ENCODE measurements at regions of chr1 and their contacts with region 1.

Region 1: DNA sequence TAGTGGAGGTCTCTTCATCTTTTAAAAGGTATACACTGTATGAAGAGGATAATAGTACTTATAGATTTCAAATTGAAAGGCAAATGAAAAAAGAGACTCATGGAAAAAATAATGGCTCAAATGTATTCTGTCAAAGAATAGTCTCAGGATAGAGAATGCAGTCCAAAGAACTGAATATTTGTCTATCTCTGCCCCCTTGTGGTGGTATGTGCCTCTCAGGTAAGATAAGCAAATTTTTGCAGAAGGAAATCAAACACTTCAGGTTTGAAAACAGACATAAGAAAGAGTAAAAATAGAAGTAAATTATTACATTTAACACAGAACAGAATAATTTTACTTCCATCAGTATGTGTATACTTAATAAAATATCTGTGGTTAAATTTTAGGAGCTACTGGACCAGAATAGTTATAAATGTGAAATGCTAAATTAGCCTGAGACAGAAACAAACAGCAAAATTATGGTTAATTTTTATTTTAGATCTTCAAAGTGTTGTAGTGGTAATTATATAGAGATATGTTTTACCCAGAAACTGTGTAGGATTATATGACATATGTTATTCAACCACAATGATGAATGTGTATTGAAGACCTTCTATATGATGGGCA is 164.4 kb upstream of the PALMD start:
- DNase-seq: peak; percentile 83
- ATAC-seq: peak; percentile 79
- H3K4me3 ChIP-seq: no peak overlapping the region
- H3K27ac ChIP-seq: no peak overlapping the region
- H3K4me1 ChIP-seq: no peaks in the 10 kb centered on the region
- H3K27me3 ChIP-seq: no peaks in the 10 kb centered on the region
- CTCF ChIP-seq: peak; percentile 94

Region 2: DNA sequence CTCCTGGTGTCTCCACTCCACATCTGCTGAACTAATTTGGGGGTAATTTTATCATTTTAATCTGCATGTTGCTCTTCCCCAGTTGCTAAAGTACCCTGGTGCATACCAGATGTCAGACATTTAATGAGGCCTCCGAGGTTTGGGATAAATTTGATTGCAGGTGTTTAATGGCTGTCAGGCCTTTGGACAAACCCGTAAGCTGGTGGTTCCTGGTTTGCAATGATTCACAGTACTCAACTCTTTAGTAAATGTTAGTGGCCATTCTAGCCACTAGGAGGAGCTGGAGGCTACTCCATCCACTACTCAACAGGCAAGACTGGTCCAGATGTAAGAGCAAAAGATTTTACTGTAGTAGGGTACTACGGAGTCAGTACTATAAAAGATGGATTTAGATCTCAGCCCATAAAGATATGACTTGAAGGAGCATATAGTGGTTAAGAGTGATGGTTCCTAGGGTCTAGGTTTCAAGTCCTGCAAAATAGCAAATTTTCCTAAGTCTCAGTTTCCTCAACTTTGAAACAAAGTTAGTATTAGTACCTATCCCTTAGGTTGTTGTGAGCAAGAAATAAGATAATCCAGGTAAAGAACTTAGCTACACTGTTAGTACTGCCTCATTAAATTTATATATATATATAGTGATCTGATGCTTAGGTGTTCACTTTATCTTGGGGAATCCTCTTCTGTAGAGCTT is 687.2 kb before region 1 on chr1:
- CTCF ChIA-PET with region 1: no interaction called
- POLR2A ChIA-PET with region 1: no interaction called
- intact Hi-C with region 1: loop called (anchors 1 kb)
- DNase-seq: peak; percentile 88
- ATAC-seq: peak; percentile 68
- H3K4me3 ChIP-seq: no peak overlapping the region
- H3K27ac ChIP-seq: no peak overlapping the region
- H3K4me1 ChIP-seq: peaks cover 32% of the 10 kb centered on the region
- H3K27me3 ChIP-seq: no peaks in the 10 kb centered on the region
- CTCF ChIP-seq: peak; percentile 91

Region 3: GRCh38 chr1:99004254-99004859 is 477.1 kb before region 1 on chr1:
- CTCF ChIA-PET with region 1: no interaction called
- POLR2A ChIA-PET with region 1: no interaction called
- intact Hi-C with region 1: loop called (anchors 10 kb)
- DNase-seq: no peak
- ATAC-seq: peak; percentile 33
- H3K4me3 ChIP-seq: peak overlapping the region; percentile 68; the same call in 1 of the 2 replicates
- H3K27ac ChIP-seq: no peak overlapping the region
- H3K4me1 ChIP-seq: peaks cover 7% of the 10 kb centered on the region
- H3K27me3 ChIP-seq: no peaks in the 10 kb centered on the region
- CTCF ChIP-seq: no peak

Region 4: GRCh38 chr1:99384021-99384420 is 97.5 kb before region 1 on chr1:
- CTCF ChIA-PET with region 1: no interaction called
- POLR2A ChIA-PET with region 1: no interaction called
- intact Hi-C with region 1: no loop called
- DNase-seq: no peak
- ATAC-seq: no peak
- H3K4me3 ChIP-seq: no peak overlapping the region
- H3K27ac ChIP-seq: no peak overlapping the region
- H3K4me1 ChIP-seq: no peaks in the 10 kb centered on the region
- H3K27me3 ChIP-seq: no peaks in the 10 kb centered on the region
- CTCF ChIP-seq: no peak

Region 5: DNA sequence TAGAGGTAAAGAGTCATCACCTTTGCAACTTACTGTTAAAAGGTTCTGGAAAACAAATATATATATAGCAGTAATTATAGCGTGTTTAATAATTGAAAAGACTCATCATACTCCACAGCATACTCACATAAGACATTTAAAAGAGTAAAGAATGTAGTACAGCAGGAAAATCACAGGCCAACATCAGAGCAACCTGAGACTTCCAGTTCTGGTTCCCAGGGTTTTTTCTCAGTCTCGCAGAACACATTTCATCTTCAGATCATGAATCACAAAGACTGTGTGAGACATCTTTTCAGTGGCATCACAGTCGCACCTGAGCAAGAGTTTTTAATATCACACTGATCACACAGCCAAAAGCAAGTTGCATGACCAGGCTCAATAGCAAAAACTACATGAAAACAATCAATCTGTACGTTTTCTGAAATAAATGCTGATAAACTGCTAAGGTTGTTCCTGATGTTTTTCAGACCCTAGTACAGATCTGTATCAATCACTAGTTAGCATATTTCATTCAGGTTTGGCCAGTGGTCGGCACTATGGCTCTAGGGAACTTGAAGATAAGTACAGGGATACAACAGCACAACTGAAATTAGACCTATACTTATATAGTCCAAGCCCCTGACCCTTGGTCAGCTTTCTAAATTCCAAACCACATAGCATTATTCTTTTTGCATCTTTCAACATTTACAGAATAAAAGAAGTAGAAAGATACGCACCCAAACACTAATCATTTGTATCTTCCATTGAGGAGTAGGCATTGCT is 74.7 kb before region 1 on chr1:
- CTCF ChIA-PET with region 1: no interaction called
- POLR2A ChIA-PET with region 1: no interaction called
- intact Hi-C with region 1: loop called (anchors 1 kb)
- DNase-seq: peak; percentile 24
- ATAC-seq: peak; percentile 64; the same call in 1 of the 2 replicates
- H3K4me3 ChIP-seq: no peak overlapping the region
- H3K27ac ChIP-seq: no peak overlapping the region
- H3K4me1 ChIP-seq: no peaks in the 10 kb centered on the region
- H3K27me3 ChIP-seq: no peaks in the 10 kb centered on the region
- CTCF ChIP-seq: peak; percentile 45

Region 6: GRCh38 chr1:99707535-99708142 is 226.1 kb after region 1 on chr1:
- CTCF ChIA-PET with region 1: interaction called, 4 read pairs
- POLR2A ChIA-PET with region 1: no interaction called
- intact Hi-C with region 1: loop called (anchors 1 kb)
- DNase-seq: peak; percentile 81
- ATAC-seq: peak; percentile 77
- H3K4me3 ChIP-seq: no peak overlapping the region
- H3K27ac ChIP-seq: no peak overlapping the region
- H3K4me1 ChIP-seq: no peaks in the 10 kb centered on the region
- H3K27me3 ChIP-seq: no peaks in the 10 kb centered on the region
- CTCF ChIP-seq: peak; percentile 96

Region 7: GRCh38 chr1:99758073-99758511 is 276.6 kb after region 1 on chr1:
- CTCF ChIA-PET with region 1: no interaction called
- POLR2A ChIA-PET with region 1: no interaction called
- intact Hi-C with region 1: no loop called
- DNase-seq: no peak
- ATAC-seq: no peak; the same call in 1 of the 2 replicates
- H3K4me3 ChIP-seq: no peak overlapping the region
- H3K27ac ChIP-seq: no peak overlapping the region
- H3K4me1 ChIP-seq: peaks cover 31% of the 10 kb centered on the region
- H3K27me3 ChIP-seq: no peaks in the 10 kb centered on the region
- CTCF ChIP-seq: no peak